CD4-positive, alpha-beta memory T cell (primary cell): ENCODE measurements at regions of chr4 and their contacts with region 1.

Region 1: DNA sequence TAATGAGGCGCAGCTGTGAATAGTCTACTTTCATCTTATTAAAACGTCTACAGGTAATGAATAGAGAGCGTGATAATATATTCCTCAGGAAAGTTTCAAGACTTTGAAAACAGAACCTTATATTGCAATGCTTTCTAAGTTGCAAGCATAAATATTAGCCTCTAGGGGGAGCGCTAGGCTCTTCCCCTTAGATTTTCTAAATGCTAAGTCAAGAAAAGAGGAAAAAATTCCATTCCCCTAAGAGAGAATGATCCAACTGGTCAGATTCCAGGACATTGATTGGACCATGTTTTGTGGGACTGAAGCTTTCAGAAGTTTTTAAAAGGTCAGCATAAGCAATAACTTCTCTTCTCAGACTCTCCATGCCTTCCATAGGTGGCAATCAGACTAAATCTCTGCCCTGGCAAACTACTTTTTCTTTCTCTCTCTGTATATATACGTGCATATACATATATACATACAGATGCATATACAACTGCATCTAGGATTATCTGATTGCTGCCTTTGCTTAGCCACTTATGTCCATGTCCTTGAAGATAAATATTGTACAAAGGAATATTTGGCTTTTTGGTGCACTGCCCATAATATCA is 492.9 kb downstream of the INPP4B start:
- DNase-seq: peak in 4 of 5 donors; percentile 39 to 52 (median 45)
- H3K4me3 ChIP-seq: peak overlapping the region in 1 of 2 donors; percentile 1
- H3K4me3 Mint-ChIP-seq: peak overlapping the region; percentile 32 to 83 (median 57)
- H3K27ac ChIP-seq: peak overlapping the region; percentile 57
- H3K27ac Mint-ChIP-seq: peak overlapping the region; percentile 5 to 96 (median 85)
- H3K4me1 ChIP-seq: peaks cover 99% of the 10 kb centered on the region
- H3K4me1 Mint-ChIP-seq: peaks cover 86 to 98% (median 93%) of the 10 kb centered on the region in 4 donors
- H3K27me3 ChIP-seq: no peaks in the 10 kb centered on the region
- H3K27me3 Mint-ChIP-seq: no peaks in the 10 kb centered on the region

Region 2: GRCh38 chr4:141540643-141541042 is 812.6 kb before region 1 on chr4:
- CTCF ChIA-PET with region 1: no interaction called
- POLR2A ChIA-PET with region 1: no interaction called
- intact Hi-C with region 1: no loop called
- DNase-seq: no peak
- H3K4me3 ChIP-seq: no peak overlapping the region
- H3K4me3 Mint-ChIP-seq: no peak overlapping the region
- H3K27ac ChIP-seq: no peak overlapping the region
- H3K27ac Mint-ChIP-seq: no peak overlapping the region
- H3K4me1 ChIP-seq: no peaks in the 10 kb centered on the region
- H3K4me1 Mint-ChIP-seq: no peaks in the 10 kb centered on the region
- H3K27me3 ChIP-seq: no peaks in the 10 kb centered on the region
- H3K27me3 Mint-ChIP-seq: no peaks in the 10 kb centered on the region

Region 3: GRCh38 chr4:142248946-142249345 is 104.3 kb before region 1 on chr4:
- CTCF ChIA-PET with region 1: no interaction called
- POLR2A ChIA-PET with region 1: no interaction called
- intact Hi-C with region 1: no loop called
- DNase-seq: no peak
- H3K4me3 ChIP-seq: no peak overlapping the region
- H3K4me3 Mint-ChIP-seq: no peak overlapping the region
- H3K27ac ChIP-seq: no peak overlapping the region
- H3K27ac Mint-ChIP-seq: no peak overlapping the region
- H3K4me1 ChIP-seq: no peaks in the 10 kb centered on the region
- H3K4me1 Mint-ChIP-seq: peaks cover 16 to 34% (median 19%) of the 10 kb centered on the region in 4 donors
- H3K27me3 ChIP-seq: no peaks in the 10 kb centered on the region
- H3K27me3 Mint-ChIP-seq: no peaks in the 10 kb centered on the region

Region 4: GRCh38 chr4:142282870-142283431 is 70.3 kb before region 1 on chr4:
- CTCF ChIA-PET with region 1: interaction called, 65 read pairs
- POLR2A ChIA-PET with region 1: interaction called, 10 read pairs
- intact Hi-C with region 1: loop called (anchors 2 kb)
- DNase-seq: peak; percentile 16 to 47 (median 43)
- H3K4me3 ChIP-seq: no peak overlapping the region
- H3K4me3 Mint-ChIP-seq: no peak overlapping the region
- H3K27ac ChIP-seq: no peak overlapping the region
- H3K27ac Mint-ChIP-seq: no peak overlapping the region
- H3K4me1 ChIP-seq: peaks cover 63% of the 10 kb centered on the region
- H3K4me1 Mint-ChIP-seq: peaks cover 16 to 23% (median 20%) of the 10 kb centered on the region in 4 donors
- H3K27me3 ChIP-seq: no peaks in the 10 kb centered on the region
- H3K27me3 Mint-ChIP-seq: no peaks in the 10 kb centered on the region

Region 5: DNA sequence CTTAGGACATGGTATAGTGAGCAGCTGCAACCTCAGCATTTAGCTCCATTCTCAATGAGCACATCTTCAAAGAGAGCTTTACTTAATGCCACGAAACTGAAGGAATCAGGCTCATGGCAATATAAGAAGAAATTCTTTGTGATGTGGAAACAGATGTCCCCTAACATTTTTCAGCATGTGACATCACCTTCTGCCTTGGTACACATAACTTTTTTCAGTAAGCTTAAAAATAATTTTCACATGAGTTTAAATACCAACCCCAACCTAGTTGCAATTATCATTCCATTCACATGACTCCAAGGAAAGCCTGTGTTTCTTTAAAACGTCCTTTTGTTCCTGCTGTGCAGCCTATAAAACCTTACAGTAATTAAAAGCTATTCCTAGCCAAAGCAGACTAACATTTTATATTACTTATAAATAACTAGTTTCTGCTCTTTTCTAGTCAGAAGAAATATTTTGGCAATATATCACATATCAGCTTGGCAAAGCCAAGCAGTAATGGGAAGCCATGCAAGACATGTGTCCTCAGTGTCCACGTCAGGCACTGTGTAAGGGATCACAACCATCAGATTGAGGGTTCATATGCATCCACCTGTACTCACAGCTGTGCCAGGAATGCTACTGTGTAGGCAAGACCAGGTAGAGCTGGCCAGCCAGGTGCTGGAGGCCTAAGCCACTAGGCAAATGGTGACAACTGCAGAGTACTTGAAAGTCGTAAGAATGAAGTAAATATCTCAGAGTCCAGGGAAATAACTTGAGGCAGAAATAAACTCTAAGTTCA is 26.2 kb after region 1 on chr4:
- CTCF ChIA-PET with region 1: interaction called, 24 read pairs
- POLR2A ChIA-PET with region 1: interaction called, 50 read pairs
- intact Hi-C with region 1: no loop called
- DNase-seq: no peak
- H3K4me3 ChIP-seq: no peak overlapping the region
- H3K4me3 Mint-ChIP-seq: peak overlapping the region in 5 of 8 donors; percentile 17 to 72 (median 60)
- H3K27ac ChIP-seq: no peak overlapping the region
- H3K27ac Mint-ChIP-seq: peak overlapping the region; percentile 31 to 92 (median 76)
- H3K4me1 ChIP-seq: peaks cover 84% of the 10 kb centered on the region
- H3K4me1 Mint-ChIP-seq: peaks cover 64 to 85% (median 74%) of the 10 kb centered on the region in 4 donors
- H3K27me3 ChIP-seq: no peaks in the 10 kb centered on the region
- H3K27me3 Mint-ChIP-seq: no peaks in the 10 kb centered on the region

Region 6: GRCh38 chr4:142416711-142417275 is 63.5 kb after region 1 on chr4:
- CTCF ChIA-PET with region 1: interaction called, 12 read pairs
- POLR2A ChIA-PET with region 1: interaction called, 45 read pairs
- intact Hi-C with region 1: loop called (anchors 1 kb)
- DNase-seq: peak; percentile 39 to 62 (median 48)
- H3K4me3 ChIP-seq: peak overlapping the region; percentile 11 to 33
- H3K4me3 Mint-ChIP-seq: peak overlapping the region; percentile 71 to 90 (median 84)
- H3K27ac ChIP-seq: peak overlapping the region; percentile 70
- H3K27ac Mint-ChIP-seq: peak overlapping the region; percentile 77 to 95 (median 92)
- H3K4me1 ChIP-seq: peaks cover 42% of the 10 kb centered on the region
- H3K4me1 Mint-ChIP-seq: peaks cover 29 to 48% (median 33%) of the 10 kb centered on the region in 4 donors
- H3K27me3 ChIP-seq: no peaks in the 10 kb centered on the region
- H3K27me3 Mint-ChIP-seq: no peaks in the 10 kb centered on the region

Region 7: GRCh38 chr4:142567199-142567598 is 214.0 kb after region 1 on chr4:
- CTCF ChIA-PET with region 1: interaction called, 107 read pairs
- POLR2A ChIA-PET with region 1: interaction called, 117 read pairs
- intact Hi-C with region 1: loop called (anchors 1 kb)
- DNase-seq: peak; percentile 69 to 74 (median 72)
- H3K4me3 ChIP-seq: peak overlapping the region; percentile 57 to 84
- H3K4me3 Mint-ChIP-seq: peak overlapping the region; percentile 80 to 97 (median 92)
- H3K27ac ChIP-seq: peak overlapping the region; percentile 75
- H3K27ac Mint-ChIP-seq: peak overlapping the region; percentile 86 to 98 (median 96)
- H3K4me1 ChIP-seq: peaks cover 73% of the 10 kb centered on the region
- H3K4me1 Mint-ChIP-seq: peaks cover 40 to 85% (median 50%) of the 10 kb centered on the region in 4 donors
- H3K27me3 ChIP-seq: no peaks in the 10 kb centered on the region
- H3K27me3 Mint-ChIP-seq: no peaks in the 10 kb centered on the region

Region 8: GRCh38 chr4:142719854-142720541 is 366.8 kb after region 1 on chr4:
- CTCF ChIA-PET with region 1: interaction called, 40 read pairs
- POLR2A ChIA-PET with region 1: interaction called, 6 read pairs
- intact Hi-C with region 1: loop called (anchors 1 kb)
- DNase-seq: peak in 4 of 5 donors; percentile 54 to 60 (median 57)
- H3K4me3 ChIP-seq: no peak overlapping the region
- H3K4me3 Mint-ChIP-seq: peak overlapping the region in 5 of 8 donors; percentile 19 to 62 (median 49)
- H3K27ac ChIP-seq: no peak overlapping the region
- H3K27ac Mint-ChIP-seq: peak overlapping the region in 5 of 7 donors; percentile 36 to 77 (median 69)
- H3K4me1 ChIP-seq: peaks cover 14% of the 10 kb centered on the region
- H3K4me1 Mint-ChIP-seq: peaks cover 11 to 26% (median 13%) of the 10 kb centered on the region in 4 donors
- H3K27me3 ChIP-seq: no peaks in the 10 kb centered on the region
- H3K27me3 Mint-ChIP-seq: peaks cover 0 to 1% of the 10 kb centered on the region in 2 donors

Region 9: GRCh38 chr4:142846729-142847596 is 493.7 kb after region 1 on chr4:
- CTCF ChIA-PET with region 1: interaction called, 3 read pairs
- POLR2A ChIA-PET with region 1: no interaction called
- intact Hi-C with region 1: loop called (anchors 1 kb)
- DNase-seq: peak; percentile 72 to 79 (median 75)
- H3K4me3 ChIP-seq: peak overlapping the region; percentile 73 to 77
- H3K4me3 Mint-ChIP-seq: peak overlapping the region; percentile 83 to 94 (median 89)
- H3K27ac ChIP-seq: no peak overlapping the region
- H3K27ac Mint-ChIP-seq: peak overlapping the region in 4 of 7 donors; percentile 23 to 66 (median 44)
- H3K4me1 ChIP-seq: peaks cover 12% of the 10 kb centered on the region
- H3K4me1 Mint-ChIP-seq: peaks cover 8 to 18% (median 12%) of the 10 kb centered on the region in 4 donors
- H3K27me3 ChIP-seq: no peaks in the 10 kb centered on the region
- H3K27me3 Mint-ChIP-seq: peaks cover 7 to 14% of the 10 kb centered on the region in 2 donors

Region 10: DNA sequence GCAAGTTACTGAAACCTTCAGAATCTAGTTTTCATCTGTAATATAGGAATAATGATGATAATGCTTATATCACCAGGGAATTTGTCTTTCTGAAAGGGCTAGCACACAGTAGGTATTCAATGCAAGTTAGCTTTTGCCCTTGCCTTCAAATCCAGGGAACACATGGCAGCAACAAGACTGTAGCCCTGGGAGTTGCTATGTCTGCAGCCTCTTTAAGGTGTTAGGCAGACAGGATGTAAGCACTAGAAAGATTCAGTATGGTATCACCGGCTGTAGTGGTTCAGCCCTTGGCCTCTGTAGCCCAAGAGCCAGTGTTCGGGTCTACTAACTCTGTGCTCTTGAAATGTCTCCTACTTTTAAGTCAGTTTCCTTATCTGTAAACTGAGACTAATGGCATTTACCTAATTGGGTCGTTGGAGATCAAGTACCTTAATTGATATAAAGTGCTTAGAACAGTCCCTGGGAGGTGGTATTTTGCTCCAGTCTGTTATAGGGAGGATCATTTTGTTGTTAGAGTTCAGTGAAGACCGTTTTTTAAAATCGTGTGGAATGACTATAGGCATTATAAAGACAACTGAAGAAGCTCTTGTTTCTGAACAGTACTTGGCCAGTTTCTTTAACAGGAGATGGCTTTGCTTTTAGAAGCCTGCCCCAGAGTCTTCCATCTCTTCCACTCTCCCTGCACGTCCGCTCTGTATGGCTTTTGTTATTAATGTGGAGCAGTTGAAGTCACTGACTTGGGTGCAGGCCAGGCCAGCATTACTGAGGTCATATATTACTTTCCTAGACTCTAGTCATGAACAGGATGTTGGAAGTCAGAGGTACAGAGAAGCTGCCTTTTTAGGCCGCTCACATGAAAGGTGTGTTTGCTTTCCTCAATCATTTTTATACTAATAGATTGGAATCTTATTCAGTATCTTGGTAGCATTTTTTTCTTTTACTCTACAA is 1028.2 kb after region 1 on chr4:
- CTCF ChIA-PET with region 1: no interaction called
- POLR2A ChIA-PET with region 1: no interaction called
- intact Hi-C with region 1: no loop called
- DNase-seq: no peak
- H3K4me3 ChIP-seq: no peak overlapping the region
- H3K4me3 Mint-ChIP-seq: no peak overlapping the region
- H3K27ac ChIP-seq: no peak overlapping the region
- H3K27ac Mint-ChIP-seq: no peak overlapping the region
- H3K4me1 ChIP-seq: no peaks in the 10 kb centered on the region
- H3K4me1 Mint-ChIP-seq: no peaks in the 10 kb centered on the region
- H3K27me3 ChIP-seq: no peaks in the 10 kb centered on the region
- H3K27me3 Mint-ChIP-seq: peaks cover 0 to 4% of the 10 kb centered on the region in 2 donors

Region 11: GRCh38 chr4:143489106-143489505 is 1135.9 kb after region 1 on chr4:
- CTCF ChIA-PET with region 1: no interaction called
- POLR2A ChIA-PET with region 1: no interaction called
- intact Hi-C with region 1: no loop called
- DNase-seq: no peak
- H3K4me3 ChIP-seq: no peak overlapping the region
- H3K4me3 Mint-ChIP-seq: no peak overlapping the region
- H3K27ac ChIP-seq: no peak overlapping the region
- H3K27ac Mint-ChIP-seq: no peak overlapping the region
- H3K4me1 ChIP-seq: no peaks in the 10 kb centered on the region
- H3K4me1 Mint-ChIP-seq: no peaks in the 10 kb centered on the region
- H3K27me3 ChIP-seq: peaks cover 5% of the 10 kb centered on the region
- H3K27me3 Mint-ChIP-seq: peaks cover 11 to 12% of the 10 kb centered on the region in 2 donors